CD8-positive, alpha-beta memory T cell (primary cell): ENCODE measurements at regions of chr11 and their contacts with region 1.

Region 1: DNA sequence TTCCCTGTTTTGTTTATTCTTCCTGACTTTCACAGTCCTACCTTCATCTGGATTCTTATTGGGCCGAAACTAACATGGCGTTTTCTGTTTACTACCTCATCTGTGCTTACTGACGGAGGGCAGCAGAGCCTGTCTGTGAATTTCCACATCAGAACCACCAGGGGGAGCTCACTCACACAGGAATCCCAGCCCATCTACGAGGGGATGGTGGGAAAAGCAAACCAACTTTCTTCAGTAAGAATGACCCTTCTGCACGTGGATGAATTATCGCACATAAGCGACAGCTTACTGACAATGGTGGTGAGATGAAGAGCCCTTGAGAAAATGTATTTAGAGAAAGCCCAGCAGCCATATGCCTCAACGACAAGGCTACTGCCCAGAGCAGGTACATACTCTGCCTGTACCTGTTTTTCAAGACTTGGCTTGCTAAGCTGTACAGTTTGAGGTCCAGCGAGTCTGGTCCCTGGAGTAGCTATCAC is 42.5 kb downstream of the LARGE2 start:
- DNase-seq: peak; percentile 31 to 75 (median 56)
- H3K4me3 ChIP-seq: no peak overlapping the region
- H3K4me3 Mint-ChIP-seq: no peak overlapping the region
- H3K27ac ChIP-seq: no peak overlapping the region
- H3K27ac Mint-ChIP-seq: no peak overlapping the region
- H3K4me1 ChIP-seq: no peaks in the 10 kb centered on the region
- H3K4me1 Mint-ChIP-seq: peaks cover 0 to 1% (median 0%) of the 10 kb centered on the region in 3 donors
- H3K27me3 ChIP-seq: no peaks in the 10 kb centered on the region
- H3K27me3 Mint-ChIP-seq: peaks cover 0 to 2% of the 10 kb centered on the region in 2 donors

Region 2: GRCh38 chr11:45907911-45908381 is 57.0 kb before region 1 on chr11:
- CTCF ChIA-PET with region 1: no interaction called
- POLR2A ChIA-PET with region 1: no interaction called
- DNase-seq: no peak
- H3K4me3 ChIP-seq: no peak overlapping the region
- H3K4me3 Mint-ChIP-seq: no peak overlapping the region
- H3K27ac ChIP-seq: no peak overlapping the region
- H3K27ac Mint-ChIP-seq: peak overlapping the region in 1 of 8 donors; percentile 88
- H3K4me1 ChIP-seq: no peaks in the 10 kb centered on the region
- H3K4me1 Mint-ChIP-seq: peaks cover 3 to 20% (median 6%) of the 10 kb centered on the region in 3 donors
- H3K27me3 ChIP-seq: no peaks in the 10 kb centered on the region
- H3K27me3 Mint-ChIP-seq: peaks cover 0 to 1% of the 10 kb centered on the region in 2 donors

Region 3: GRCh38 chr11:45949992-45950407 is 14.9 kb before region 1 on chr11:
- CTCF ChIA-PET with region 1: interaction called, 18 read pairs
- POLR2A ChIA-PET with region 1: no interaction called
- DNase-seq: no peak
- H3K4me3 ChIP-seq: no peak overlapping the region
- H3K4me3 Mint-ChIP-seq: no peak overlapping the region
- H3K27ac ChIP-seq: no peak overlapping the region
- H3K27ac Mint-ChIP-seq: peak overlapping the region in 1 of 8 donors; percentile 58
- H3K4me1 ChIP-seq: no peaks in the 10 kb centered on the region
- H3K4me1 Mint-ChIP-seq: no peaks in the 10 kb centered on the region
- H3K27me3 ChIP-seq: no peaks in the 10 kb centered on the region
- H3K27me3 Mint-ChIP-seq: no peaks in the 10 kb centered on the region

Region 4: GRCh38 chr11:45982656-45983470 is 17.9 kb after region 1 on chr11:
- CTCF ChIA-PET with region 1: interaction called, 17 read pairs
- POLR2A ChIA-PET with region 1: no interaction called
- DNase-seq: no peak
- H3K4me3 ChIP-seq: no peak overlapping the region
- H3K4me3 Mint-ChIP-seq: no peak overlapping the region
- H3K27ac ChIP-seq: no peak overlapping the region
- H3K27ac Mint-ChIP-seq: peak overlapping the region in 5 of 8 donors; percentile 15 to 72 (median 29)
- H3K4me1 ChIP-seq: no peaks in the 10 kb centered on the region
- H3K4me1 Mint-ChIP-seq: peaks cover 26 to 50% (median 40%) of the 10 kb centered on the region in 3 donors
- H3K27me3 ChIP-seq: no peaks in the 10 kb centered on the region
- H3K27me3 Mint-ChIP-seq: no peaks in the 10 kb centered on the region

Region 5: DNA sequence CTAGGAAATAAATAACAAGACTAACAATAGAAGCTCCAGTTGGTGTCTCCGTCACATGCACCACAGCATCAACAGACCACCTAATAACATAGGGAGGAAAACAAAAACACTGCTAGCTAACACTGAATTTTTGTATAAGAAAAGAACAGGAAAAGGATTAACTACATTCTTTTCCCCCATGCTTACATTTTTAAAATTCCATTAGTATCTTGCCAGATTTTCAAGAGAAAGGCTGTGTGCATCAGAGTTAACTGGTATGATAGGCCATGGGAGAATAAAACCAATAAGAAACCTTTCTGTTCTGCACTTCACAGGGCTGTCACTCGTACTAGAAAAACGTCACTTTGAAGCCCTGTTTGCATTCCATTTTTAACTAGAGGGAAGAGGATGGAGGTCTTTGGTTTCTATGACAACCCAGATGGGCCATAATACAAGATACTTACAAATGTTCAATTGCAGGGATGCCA is 36.5 kb after region 1 on chr11:
- CTCF ChIA-PET with region 1: interaction called, 25 read pairs
- POLR2A ChIA-PET with region 1: no interaction called
- DNase-seq: no peak
- H3K4me3 ChIP-seq: no peak overlapping the region
- H3K4me3 Mint-ChIP-seq: no peak overlapping the region
- H3K27ac ChIP-seq: no peak overlapping the region
- H3K27ac Mint-ChIP-seq: peak overlapping the region in 1 of 8 donors; percentile 11
- H3K4me1 ChIP-seq: no peaks in the 10 kb centered on the region
- H3K4me1 Mint-ChIP-seq: peaks cover 10 to 29% (median 18%) of the 10 kb centered on the region in 3 donors
- H3K27me3 ChIP-seq: no peaks in the 10 kb centered on the region
- H3K27me3 Mint-ChIP-seq: no peaks in the 10 kb centered on the region

Region 6: GRCh38 chr11:46006418-46007070 is 41.6 kb after region 1 on chr11:
- CTCF ChIA-PET with region 1: interaction called, 25 read pairs
- POLR2A ChIA-PET with region 1: no interaction called
- DNase-seq: peak in 3 of 5 donors; percentile 36 to 46 (median 43)
- H3K4me3 ChIP-seq: no peak overlapping the region
- H3K4me3 Mint-ChIP-seq: no peak overlapping the region
- H3K27ac ChIP-seq: no peak overlapping the region
- H3K27ac Mint-ChIP-seq: peak overlapping the region in 4 of 8 donors; percentile 4 to 68 (median 32)
- H3K4me1 ChIP-seq: no peaks in the 10 kb centered on the region
- H3K4me1 Mint-ChIP-seq: peaks cover 6 to 10% (median 7%) of the 10 kb centered on the region in 3 donors
- H3K27me3 ChIP-seq: no peaks in the 10 kb centered on the region
- H3K27me3 Mint-ChIP-seq: no peaks in the 10 kb centered on the region

Region 7: GRCh38 chr11:46050003-46050461 is 85.1 kb after region 1 on chr11:
- CTCF ChIA-PET with region 1: no interaction called
- POLR2A ChIA-PET with region 1: no interaction called
- DNase-seq: no peak
- H3K4me3 ChIP-seq: no peak overlapping the region
- H3K4me3 Mint-ChIP-seq: peak overlapping the region in 1 of 7 donors; percentile 27
- H3K27ac ChIP-seq: no peak overlapping the region
- H3K27ac Mint-ChIP-seq: peak overlapping the region in 2 of 8 donors; percentile 14 to 50
- H3K4me1 ChIP-seq: no peaks in the 10 kb centered on the region
- H3K4me1 Mint-ChIP-seq: peaks cover 16 to 33% (median 32%) of the 10 kb centered on the region in 3 donors
- H3K27me3 ChIP-seq: no peaks in the 10 kb centered on the region
- H3K27me3 Mint-ChIP-seq: peaks cover 0 to 2% of the 10 kb centered on the region in 2 donors

Region 8: DNA sequence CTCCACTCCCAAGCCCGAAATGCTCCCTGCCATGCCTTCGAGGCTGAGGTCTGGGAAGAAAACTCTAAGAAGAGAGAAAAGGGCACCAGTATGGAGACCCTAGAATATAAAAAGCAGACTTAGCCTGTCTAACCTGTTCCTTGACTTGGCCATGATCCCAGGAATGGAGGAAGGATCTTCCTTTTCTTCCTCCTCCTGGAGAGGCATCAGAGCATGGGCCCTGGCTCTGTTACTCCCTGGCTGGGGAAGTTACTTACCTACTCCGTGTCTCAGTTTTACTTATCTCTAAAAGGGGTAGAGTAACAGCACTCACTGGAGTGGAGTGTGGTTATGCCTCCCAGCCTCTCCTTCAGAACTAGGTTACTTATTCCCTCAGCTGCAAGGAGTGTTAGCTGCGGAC is 211.5 kb after region 1 on chr11:
- CTCF ChIA-PET with region 1: no interaction called
- POLR2A ChIA-PET with region 1: no interaction called
- DNase-seq: no peak
- H3K4me3 ChIP-seq: no peak overlapping the region
- H3K4me3 Mint-ChIP-seq: no peak overlapping the region
- H3K27ac ChIP-seq: no peak overlapping the region
- H3K27ac Mint-ChIP-seq: no peak overlapping the region
- H3K4me1 ChIP-seq: no peaks in the 10 kb centered on the region
- H3K4me1 Mint-ChIP-seq: no peaks in the 10 kb centered on the region
- H3K27me3 ChIP-seq: no peaks in the 10 kb centered on the region
- H3K27me3 Mint-ChIP-seq: peaks cover 10 to 52% of the 10 kb centered on the region in 2 donors